ENCODE measurements at regions of chr17 and their contacts with region 1.

Region 1: GRCh38 chr17:57106107-57106835 is 21.2 kb downstream of the AKAP1 start:
- DNase-seq: peak; percentile 65 to 94
- ATAC-seq: peak; percentile 43 to 57
- H3K4me3 ChIP-seq: no peak overlapping the region
- H3K27ac ChIP-seq: peak overlapping the region; percentile 93 to 99 (median 95)
- H3K4me1 ChIP-seq: peaks cover 62 to 77% of the 10 kb centered on the region in 2 donors
- H3K27me3 ChIP-seq: no peaks in the 10 kb centered on the region
- CTCF ChIP-seq: peak; percentile 26 to 59 (median 53)
- POLR2A ChIP-seq: no peak

Region 2: GRCh38 chr17:56833809-56834379 is 272.4 kb before region 1 on chr17 and contains the starts of genes C17orf67 and DGKE:
- in situ Hi-C with region 1: no loop called
- intact Hi-C with region 1: loop called (anchors 10 kb)
- DNase-seq: peak; percentile 93 to 94
- ATAC-seq: peak; percentile 93 to 96
- H3K4me3 ChIP-seq: peak within 1 kb of the TSS; percentile 65 to 73 (median 69)
- H3K27ac ChIP-seq: peak within 1 kb of the TSS; percentile 57 to 84 (median 72)
- H3K4me1 ChIP-seq: peaks cover 10 to 13% of the 10 kb centered on the region in 2 donors
- H3K27me3 ChIP-seq: peaks cover 0 to 5% (median 0%) of the 10 kb centered on the region in 3 donors
- CTCF ChIP-seq: no peak
- POLR2A ChIP-seq: peak; percentile 39 to 63
- total RNA-seq, gene C17orf67: 0.16 TPM in 1 of 4 donors, not detected in the others
- total RNA-seq, gene DGKE: 0.53 to 3.0 (median 1.6) TPM

Region 3: GRCh38 chr17:57016747-57017082 is 89.6 kb before region 1 on chr17:
- in situ Hi-C with region 1: no loop called
- intact Hi-C with region 1: no loop called
- DNase-seq: no peak
- ATAC-seq: no peak
- H3K4me3 ChIP-seq: no peak overlapping the region
- H3K27ac ChIP-seq: no peak overlapping the region
- H3K4me1 ChIP-seq: peaks cover 0 to 5% of the 10 kb centered on the region in 2 donors
- H3K27me3 ChIP-seq: no peaks in the 10 kb centered on the region
- CTCF ChIP-seq: no peak
- POLR2A ChIP-seq: no peak

Region 4: DNA sequence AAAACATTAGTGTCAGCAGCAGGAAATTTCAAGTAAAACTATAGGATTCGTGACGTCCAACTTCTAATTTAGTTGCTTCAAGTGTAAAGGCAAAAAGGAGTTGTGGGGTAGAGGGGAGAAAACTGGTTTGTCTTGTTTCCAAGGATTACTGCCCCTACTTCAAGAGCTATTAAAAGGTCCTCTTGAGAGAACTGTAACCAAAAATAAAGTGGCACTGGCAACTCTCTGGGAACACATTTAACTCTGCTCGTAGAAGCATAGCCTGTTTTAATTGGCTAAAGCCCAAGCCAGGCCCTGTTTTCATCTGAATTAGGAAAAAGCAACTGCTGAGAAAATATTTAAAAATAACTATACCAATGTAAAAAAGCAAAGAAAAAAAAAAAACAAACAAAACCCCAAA is 73.0 kb before region 1 on chr17:
- in situ Hi-C with region 1: no loop called
- intact Hi-C with region 1: no loop called
- DNase-seq: no peak
- ATAC-seq: peak in 1 of 2 donors; percentile 59
- H3K4me3 ChIP-seq: no peak overlapping the region
- H3K27ac ChIP-seq: peak overlapping the region; percentile 53 to 83 (median 69)
- H3K4me1 ChIP-seq: peaks cover 35 to 41% of the 10 kb centered on the region in 2 donors
- H3K27me3 ChIP-seq: no peaks in the 10 kb centered on the region
- CTCF ChIP-seq: no peak
- POLR2A ChIP-seq: no peak

Region 5: GRCh38 chr17:57051886-57052361 is 54.3 kb before region 1 on chr17:
- in situ Hi-C with region 1: no loop called
- intact Hi-C with region 1: loop called (anchors 2 kb)
- DNase-seq: peak; percentile 76 to 79
- ATAC-seq: peak; percentile 91 to 96
- H3K4me3 ChIP-seq: no peak overlapping the region
- H3K27ac ChIP-seq: peak overlapping the region; percentile 72 to 88 (median 84)
- H3K4me1 ChIP-seq: peaks cover 19 to 35% of the 10 kb centered on the region in 2 donors
- H3K27me3 ChIP-seq: no peaks in the 10 kb centered on the region
- CTCF ChIP-seq: no peak
- POLR2A ChIP-seq: peak in 1 of 2 donors; percentile 46

Region 6: DNA sequence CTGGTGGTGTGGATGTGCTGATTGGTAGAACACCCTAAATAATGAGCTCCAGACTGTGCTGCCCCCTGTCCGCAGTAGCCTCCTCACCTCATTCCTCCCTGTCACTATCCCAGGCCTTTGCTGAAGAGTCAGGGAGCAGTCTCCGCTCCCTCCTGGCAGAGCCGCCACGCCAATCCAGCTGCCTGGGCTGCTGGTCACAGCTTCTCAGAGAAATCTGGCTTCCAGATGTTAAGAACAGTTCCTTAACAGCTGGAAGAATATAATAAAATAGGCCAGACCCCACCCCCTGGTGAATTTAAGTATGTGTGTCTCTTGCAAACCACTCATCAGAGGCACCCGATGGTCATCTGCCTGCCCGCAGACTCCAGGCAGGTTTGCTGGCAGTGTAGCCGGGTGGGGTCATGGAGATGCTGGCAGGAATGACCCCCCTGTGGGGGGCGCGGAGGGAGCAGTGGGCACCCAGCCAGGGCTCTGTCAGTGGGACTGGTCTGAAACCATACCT is 477.8 kb after region 1 on chr17:
- in situ Hi-C with region 1: no loop called
- intact Hi-C with region 1: loop called (anchors 10 kb)
- DNase-seq: no peak
- ATAC-seq: no peak
- H3K4me3 ChIP-seq: no peak overlapping the region
- H3K27ac ChIP-seq: no peak overlapping the region
- H3K4me1 ChIP-seq: peaks cover 18 to 47% of the 10 kb centered on the region in 2 donors
- H3K27me3 ChIP-seq: no peaks in the 10 kb centered on the region
- CTCF ChIP-seq: no peak
- POLR2A ChIP-seq: no peak

Region 7: GRCh38 chr17:57833179-57833939 is 727.1 kb after region 1 on chr17:
- in situ Hi-C with region 1: no loop called
- intact Hi-C with region 1: loop called (anchors 5 kb)
- DNase-seq: peak; percentile 48 to 77
- ATAC-seq: peak; percentile 81 to 82
- H3K4me3 ChIP-seq: peak overlapping the region; percentile 28 to 57 (median 55)
- H3K27ac ChIP-seq: peak overlapping the region; percentile 71 to 92 (median 88)
- H3K4me1 ChIP-seq: peaks cover 37 to 52% of the 10 kb centered on the region in 2 donors
- H3K27me3 ChIP-seq: no peaks in the 10 kb centered on the region
- CTCF ChIP-seq: peak; percentile 86 to 93 (median 90)
- POLR2A ChIP-seq: peak; percentile 18 to 29

Region 8: GRCh38 chr17:58006924-58007780 is 900.9 kb after region 1 on chr17 and contains the start of gene SRSF1:
- in situ Hi-C with region 1: no loop called
- intact Hi-C with region 1: loop called (anchors 5 kb)
- DNase-seq: peak; percentile 95 to 96
- ATAC-seq: peak; percentile 90 to 93
- H3K4me3 ChIP-seq: peak within 1 kb of the TSS; percentile 91 to 98 (median 97)
- H3K27ac ChIP-seq: peak within 1 kb of the TSS; percentile 96 to 100 (median 100)
- H3K4me1 ChIP-seq: peaks cover 47 to 48% of the 10 kb centered on the region in 2 donors
- H3K27me3 ChIP-seq: no peaks in the 10 kb centered on the region
- CTCF ChIP-seq: peak in 1 of 5 experiments; percentile 25
- POLR2A ChIP-seq: peak; percentile 97 to 98
- total RNA-seq, gene SRSF1: 69.4 to 85.4 (median 82.2) TPM

Measured in gastrocnemius medialis (tissue), 4 donors.